Gastrocnemius medialis (tissue), 4 donors: ENCODE measurements at regions of chr18 and their contacts with region 1.

Region 1: GRCh38 chr18:61743775-61744531 is 148.9 kb downstream of the RNF152 start:
- DNase-seq: peak in 1 of 2 donors; percentile 36
- ATAC-seq: peak; percentile 55 to 64
- H3K4me3 ChIP-seq: no peak overlapping the region
- H3K27ac ChIP-seq: peak overlapping the region; percentile 72 to 78 (median 74)
- H3K4me1 ChIP-seq: peaks cover 5 to 8% of the 10 kb centered on the region in 2 donors
- H3K27me3 ChIP-seq: no peaks in the 10 kb centered on the region
- CTCF ChIP-seq: no peak
- POLR2A ChIP-seq: no peak

Region 2: GRCh38 chr18:61581578-61582201 is 162.3 kb before region 1 on chr18:
- in situ Hi-C with region 1: no loop called
- intact Hi-C with region 1: loop called (anchors 10 kb)
- DNase-seq: peak; percentile 24 to 43
- ATAC-seq: peak; percentile 75 to 83
- H3K4me3 ChIP-seq: peak overlapping the region; percentile 43 to 53 (median 45)
- H3K27ac ChIP-seq: peak overlapping the region; percentile 37 to 69 (median 54)
- H3K4me1 ChIP-seq: peaks cover 8 to 17% of the 10 kb centered on the region in 2 donors
- H3K27me3 ChIP-seq: no peaks in the 10 kb centered on the region
- CTCF ChIP-seq: peak; percentile 70 to 97 (median 88)
- POLR2A ChIP-seq: no peak

Region 3: GRCh38 chr18:61833387-61833786 is 89.4 kb after region 1 on chr18:
- in situ Hi-C with region 1: no loop called
- intact Hi-C with region 1: loop called (anchors 10 kb)
- DNase-seq: no peak
- ATAC-seq: no peak
- H3K4me3 ChIP-seq: no peak overlapping the region
- H3K27ac ChIP-seq: peak overlapping the region in 1 of 4 donors; percentile 2
- H3K4me1 ChIP-seq: peaks cover 0 to 10% of the 10 kb centered on the region in 2 donors
- H3K27me3 ChIP-seq: no peaks in the 10 kb centered on the region
- CTCF ChIP-seq: no peak
- POLR2A ChIP-seq: no peak

Region 4: DNA sequence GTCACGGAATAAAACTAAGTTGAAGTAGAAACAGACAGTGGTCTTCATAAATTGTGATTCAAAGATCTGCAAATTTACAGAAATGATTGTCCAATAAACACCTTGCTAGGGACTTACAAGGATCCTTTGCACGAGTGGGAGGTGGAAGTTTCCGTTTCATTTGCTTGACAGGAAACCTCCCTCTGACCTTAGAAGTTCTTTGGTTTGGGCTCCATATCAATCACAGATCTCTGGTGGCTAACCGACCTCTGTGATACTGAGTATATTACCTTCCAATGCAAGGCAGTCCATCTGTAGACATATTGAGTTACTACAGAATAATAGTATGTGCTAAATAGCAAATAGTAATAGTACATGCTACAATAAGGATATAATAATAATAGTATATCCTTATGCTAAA is 182.6 kb after region 1 on chr18:
- in situ Hi-C with region 1: no loop called
- intact Hi-C with region 1: no loop called
- DNase-seq: no peak
- ATAC-seq: no peak
- H3K4me3 ChIP-seq: no peak overlapping the region
- H3K27ac ChIP-seq: no peak overlapping the region
- H3K4me1 ChIP-seq: no peaks in the 10 kb centered on the region
- H3K27me3 ChIP-seq: no peaks in the 10 kb centered on the region
- CTCF ChIP-seq: no peak
- POLR2A ChIP-seq: no peak